Activated naive CD4-positive, alpha-beta T cell treated with anti-CD3 and anti-CD28 coated beads, Interleukin-2, amount 10 ng/mL, durations not matched to agents 7 days and 5 days (primary cell): ENCODE measurements at regions of chr15 and their contacts with region 1.

Region 1: GRCh38 chr15:89472785-89473256 is 23.6 kb downstream of the RHCG start:
- DNase-seq: peak; percentile 64
- H3K4me3 Mint-ChIP-seq: no peak overlapping the region
- H3K27ac Mint-ChIP-seq: no peak overlapping the region
- H3K4me1 Mint-ChIP-seq: no peaks in the 10 kb centered on the region
- H3K27me3 Mint-ChIP-seq: peaks cover 53% of the 10 kb centered on the region

Region 2: GRCh38 chr15:89442671-89443307 is 30.0 kb before region 1 on chr15:
- CTCF ChIA-PET with region 1: interaction called, 24 read pairs
- DNase-seq: peak; percentile 69
- H3K4me3 Mint-ChIP-seq: no peak overlapping the region
- H3K27ac Mint-ChIP-seq: no peak overlapping the region
- H3K4me1 Mint-ChIP-seq: no peaks in the 10 kb centered on the region
- H3K27me3 Mint-ChIP-seq: peaks cover 53% of the 10 kb centered on the region

Region 3: GRCh38 chr15:89531796-89532537 is 59.1 kb after region 1 on chr15:
- CTCF ChIA-PET with region 1: no interaction called
- DNase-seq: no peak
- H3K4me3 Mint-ChIP-seq: no peak overlapping the region
- H3K27ac Mint-ChIP-seq: no peak overlapping the region
- H3K4me1 Mint-ChIP-seq: peaks cover 3% of the 10 kb centered on the region
- H3K27me3 Mint-ChIP-seq: peaks cover 16% of the 10 kb centered on the region